HEK293 (cell line): ENCODE measurements at regions of chr2 and their contacts with region 1.

Region 1: GRCh38 chr2:241315093-241315878 is at the start of gene HDLBP:
- H3K4me3 ChIP-seq: peak within 1 kb of the TSS; percentile 94
- H3K27ac ChIP-seq: peak within 1 kb of the TSS; percentile 99
- H3K4me1 ChIP-seq: peaks cover 25% of the 10 kb centered on the region
- CTCF ChIP-seq: peak; percentile 98

Region 2: GRCh38 chr2:241268716-241269442 is 46.4 kb before region 1 on chr2:
- CTCF ChIA-PET with region 1: interaction called, 5 read pairs
- POLR2A ChIA-PET with region 1: interaction called, 11 read pairs
- H3K4me3 ChIP-seq: no peak overlapping the region
- H3K27ac ChIP-seq: no peak overlapping the region
- H3K4me1 ChIP-seq: peaks cover 6% of the 10 kb centered on the region
- CTCF ChIP-seq: no peak

Region 3: GRCh38 chr2:241289597-241289996 is 25.7 kb before region 1 on chr2:
- CTCF ChIA-PET with region 1: interaction called, 4 read pairs
- POLR2A ChIA-PET with region 1: interaction called, 12 read pairs
- H3K4me3 ChIP-seq: no peak overlapping the region
- H3K27ac ChIP-seq: no peak overlapping the region
- H3K4me1 ChIP-seq: peaks cover 4% of the 10 kb centered on the region; the same call in 1 of the 2 replicates
- CTCF ChIP-seq: peak; percentile 52; the same call in 1 of the 2 replicates

Region 4: DNA sequence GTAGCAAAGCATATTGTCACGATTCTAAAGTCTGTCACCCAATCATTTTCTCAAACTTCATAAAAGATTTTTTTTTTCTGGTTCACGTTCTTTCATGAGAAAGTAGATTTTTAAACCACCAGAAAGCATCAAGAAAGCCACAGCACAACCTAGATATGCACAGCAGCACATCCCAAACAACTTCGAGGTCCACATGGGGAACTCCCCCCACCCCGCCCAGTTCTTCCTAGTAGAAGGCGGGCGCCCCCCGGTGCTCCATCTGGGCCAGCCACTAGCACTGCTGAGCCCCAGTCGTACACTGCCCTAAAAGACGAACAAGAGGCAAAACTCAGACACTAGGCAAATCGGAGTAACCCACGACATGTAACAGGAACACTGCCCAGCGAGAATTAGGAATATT is 15.3 kb before region 1 on chr2:
- CTCF ChIA-PET with region 1: interaction called, 4 read pairs
- POLR2A ChIA-PET with region 1: interaction called, 21 read pairs
- H3K4me3 ChIP-seq: no peak overlapping the region
- H3K27ac ChIP-seq: no peak overlapping the region
- H3K4me1 ChIP-seq: peaks cover 4% of the 10 kb centered on the region; the same call in 1 of the 2 replicates
- CTCF ChIP-seq: no peak